Activated B cell treated with CpG ODN at 0.5 μM for 24 hours (primary cell): ENCODE measurements at regions of chr15 and their contacts with region 1.

Region 1: DNA sequence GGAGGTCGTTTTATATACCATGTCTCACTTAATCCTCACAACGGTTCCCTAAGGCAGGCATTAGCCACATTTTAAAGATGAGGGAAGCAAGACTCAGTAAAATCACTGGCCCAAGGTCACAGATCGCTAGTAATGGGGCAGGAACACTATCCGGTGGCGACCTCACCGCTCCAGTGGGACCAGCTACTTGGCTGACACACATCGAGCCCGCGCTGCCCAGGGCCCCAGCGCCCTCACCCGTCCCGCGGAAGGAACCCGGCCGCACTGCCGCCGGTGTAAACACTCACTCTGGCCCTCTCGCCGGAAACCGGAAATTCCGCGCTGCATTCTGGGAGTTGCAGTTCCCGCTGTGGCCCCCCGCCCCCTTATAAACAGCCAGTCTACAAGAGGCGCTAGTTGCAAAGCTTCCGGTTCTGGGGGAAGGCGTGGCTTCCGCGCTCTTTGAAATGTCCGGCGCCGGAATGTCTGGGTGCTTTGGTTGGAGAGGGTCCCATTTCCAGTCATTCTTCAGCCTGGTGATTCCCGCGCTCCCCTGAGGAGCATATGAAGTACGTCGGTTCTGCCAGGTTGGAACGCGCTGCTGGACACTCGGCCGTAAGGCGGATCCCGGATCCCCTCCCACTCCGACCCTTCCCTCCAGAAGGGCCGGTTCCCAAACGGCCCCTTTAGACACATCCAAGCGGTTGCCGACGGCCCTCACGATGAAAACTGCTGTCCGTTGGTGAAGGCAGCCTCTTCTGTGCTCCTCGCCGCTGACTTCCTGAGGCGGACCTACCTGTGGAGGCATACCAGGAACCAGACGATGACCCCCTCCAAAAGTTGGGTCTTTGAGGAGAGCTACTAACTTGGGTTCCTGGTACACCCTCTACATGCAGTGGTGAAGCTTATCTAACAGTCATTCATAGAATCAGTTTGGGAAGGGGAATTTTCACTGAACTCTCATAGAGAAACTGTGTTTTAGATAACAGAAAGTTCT is at the start of gene UBL7:
- DNase-seq: peak; percentile 92
- ATAC-seq: peak; percentile 95
- H3K4me3 Mint-ChIP-seq: peak within 1 kb of the TSS; percentile 93
- H3K27ac Mint-ChIP-seq: peak within 1 kb of the TSS; percentile 91
- H3K4me1 Mint-ChIP-seq: peaks cover 44% of the 10 kb centered on the region
- H3K27me3 Mint-ChIP-seq: no peaks in the 10 kb centered on the region
- CTCF ChIP-seq: no peak
- total RNA-seq, gene UBL7: 40.6 and 48.8 TPM in 2 replicates

Region 2: DNA sequence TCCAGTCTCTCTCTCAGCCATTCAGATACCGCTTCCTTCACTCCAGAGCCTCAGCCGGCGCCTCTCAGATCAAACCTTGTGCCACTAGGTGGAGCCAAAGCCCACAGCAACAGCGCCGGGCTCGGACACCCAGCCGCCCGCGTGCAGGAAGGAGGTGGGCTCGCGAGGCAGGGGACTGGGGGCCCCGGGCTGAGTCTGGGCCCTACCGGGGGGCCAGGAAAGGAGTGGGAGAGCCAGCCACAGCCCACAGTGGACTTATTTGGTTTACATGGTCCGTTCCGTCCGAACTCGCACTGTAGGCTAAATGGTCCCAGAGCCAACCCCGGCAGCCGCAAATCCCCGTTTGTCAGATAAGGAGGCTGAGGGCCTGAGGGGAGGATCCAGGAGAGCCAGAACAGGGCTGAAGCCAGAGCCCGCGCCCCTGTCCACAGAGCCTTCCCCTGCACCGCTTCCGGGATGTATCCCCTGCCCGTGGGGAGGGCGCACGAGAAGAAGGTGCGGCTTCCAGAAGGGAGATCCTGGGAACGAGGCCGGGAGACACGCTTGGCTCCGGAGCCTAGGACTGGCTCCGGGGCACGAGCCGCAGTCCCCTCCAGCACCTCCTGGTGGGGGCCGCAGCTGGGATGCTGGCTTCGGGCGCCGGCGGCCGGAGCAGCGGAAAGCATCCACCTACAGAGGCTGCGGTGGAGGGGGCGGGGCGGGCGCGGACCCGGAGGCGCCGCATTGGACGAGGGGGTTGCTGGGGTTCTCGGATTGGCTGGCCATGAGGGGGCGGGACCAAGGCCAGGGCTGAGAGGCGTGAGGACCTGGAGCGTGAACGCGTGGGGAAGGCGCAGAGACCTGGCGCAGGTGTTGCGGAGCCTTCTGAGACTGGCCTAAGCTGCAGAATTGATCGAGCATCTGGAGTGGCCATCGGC is 87.2 kb before region 1 on chr15:
- CTCF ChIA-PET with region 1: interaction called, 5 read pairs
- POLR2A ChIA-PET with region 1: interaction called, 7 read pairs
- intact Hi-C with region 1: loop called (anchors 1 kb)
- DNase-seq: peak; percentile 89
- ATAC-seq: peak; percentile 94
- H3K4me3 Mint-ChIP-seq: peak overlapping the region; percentile 81
- H3K27ac Mint-ChIP-seq: peak overlapping the region; percentile 12
- H3K4me1 Mint-ChIP-seq: peaks cover 29% of the 10 kb centered on the region
- H3K27me3 Mint-ChIP-seq: peaks cover 9% of the 10 kb centered on the region
- CTCF ChIP-seq: peak; percentile 32

Region 3: DNA sequence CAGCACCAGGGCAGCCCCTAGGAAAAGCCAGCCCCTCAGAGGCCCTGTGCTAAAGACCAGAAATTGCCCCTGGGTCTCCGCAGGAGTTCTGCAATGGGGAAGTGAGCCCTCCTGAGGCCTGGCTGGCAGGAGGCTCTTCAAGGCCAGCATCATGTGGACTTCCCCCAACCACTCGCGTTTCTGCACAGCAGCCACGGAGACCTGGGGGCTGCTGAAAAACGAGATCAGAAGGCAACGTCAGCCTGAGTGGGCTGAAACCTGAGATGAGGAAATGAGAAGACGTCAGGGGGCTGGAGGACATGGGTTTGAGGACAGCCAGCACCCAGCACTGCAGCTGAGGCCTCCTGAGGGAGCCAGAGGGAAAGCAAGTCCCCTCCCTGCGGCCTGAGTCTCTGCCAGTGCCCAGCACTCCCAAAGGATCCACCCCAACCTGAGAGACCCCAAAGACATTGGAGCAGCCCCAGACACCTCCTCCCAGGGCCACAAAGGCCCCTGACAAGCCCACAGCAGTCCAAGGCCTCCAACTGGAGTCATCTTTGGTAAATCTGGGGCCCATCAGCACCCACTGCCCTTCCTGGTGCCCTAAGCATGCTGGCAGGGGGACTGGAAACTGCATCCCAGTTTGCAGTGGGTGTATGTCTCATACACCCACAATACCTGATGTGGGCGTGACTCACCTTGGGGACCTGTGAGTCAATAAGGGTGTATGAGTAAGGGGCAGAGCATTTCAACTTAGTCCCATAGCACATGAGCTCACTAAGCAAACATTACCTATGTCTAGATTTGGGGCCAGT is 64.5 kb before region 1 on chr15:
- CTCF ChIA-PET with region 1: no interaction called
- POLR2A ChIA-PET with region 1: interaction called, 13 read pairs
- intact Hi-C with region 1: loop called (anchors 2 kb)
- DNase-seq: peak; percentile 72
- ATAC-seq: peak; percentile 66
- H3K4me3 Mint-ChIP-seq: peak overlapping the region; percentile 80
- H3K27ac Mint-ChIP-seq: peak overlapping the region; percentile 99
- H3K4me1 Mint-ChIP-seq: peaks cover 100% of the 10 kb centered on the region
- H3K27me3 Mint-ChIP-seq: no peaks in the 10 kb centered on the region
- CTCF ChIP-seq: no peak

Region 4: GRCh38 chr15:74433592-74434262 is 27.4 kb before region 1 on chr15 and contains the start of gene SEMA7A:
- CTCF ChIA-PET with region 1: interaction called, 3 read pairs
- POLR2A ChIA-PET with region 1: interaction called, 26 read pairs
- intact Hi-C with region 1: loop called (anchors 1 kb)
- DNase-seq: peak; percentile 83
- ATAC-seq: peak; percentile 80
- H3K4me3 Mint-ChIP-seq: peak within 1 kb of the TSS; percentile 96
- H3K27ac Mint-ChIP-seq: peak within 1 kb of the TSS; percentile 90
- H3K4me1 Mint-ChIP-seq: peaks cover 76% of the 10 kb centered on the region
- H3K27me3 Mint-ChIP-seq: no peaks in the 10 kb centered on the region
- CTCF ChIP-seq: no peak
- total RNA-seq, gene SEMA7A: 159 and 178 TPM in 2 replicates

Region 5: DNA sequence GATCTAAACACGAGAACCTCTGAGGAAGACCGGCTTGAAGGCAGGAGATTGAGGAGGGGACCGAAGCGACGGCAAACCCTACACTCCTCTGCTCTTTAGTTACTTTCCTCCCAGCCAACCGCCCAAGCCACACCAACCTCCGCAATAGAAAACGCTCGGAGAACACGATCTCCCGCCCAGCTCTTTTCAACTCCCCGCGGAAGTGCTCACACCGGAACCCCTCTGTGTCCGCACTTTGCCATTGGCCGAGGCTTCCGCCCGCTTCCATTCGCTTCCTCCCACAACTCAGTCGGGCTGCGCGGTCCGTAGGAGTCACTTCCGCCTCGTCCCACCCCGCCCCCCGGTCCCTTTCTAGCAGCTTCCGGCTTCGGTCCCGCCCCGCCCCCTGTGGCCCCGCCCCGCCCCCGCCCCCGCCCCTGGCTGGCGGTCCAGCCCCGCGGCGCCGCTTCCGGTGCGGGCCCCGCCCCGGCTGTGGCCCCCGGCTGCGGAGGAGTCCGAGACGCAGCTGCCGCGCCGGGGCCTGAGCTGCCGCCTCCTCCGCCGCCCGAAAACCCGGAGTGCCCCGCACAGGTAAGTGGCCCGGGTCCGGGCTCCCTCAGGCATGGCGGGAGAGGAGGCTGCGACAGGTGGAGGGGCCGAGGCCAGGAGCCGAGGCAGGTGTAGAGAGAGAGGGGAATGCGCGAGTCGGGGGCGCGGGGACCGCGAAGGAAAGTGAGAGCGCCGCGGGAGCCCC is 79.8 kb after region 1 on chr15 and contains the start of gene ARID3B:
- CTCF ChIA-PET with region 1: no interaction called
- POLR2A ChIA-PET with region 1: interaction called, 11 read pairs
- intact Hi-C with region 1: loop called (anchors 1 kb)
- DNase-seq: peak; percentile 79
- ATAC-seq: peak; percentile 86
- H3K4me3 Mint-ChIP-seq: peak within 1 kb of the TSS; percentile 98
- H3K27ac Mint-ChIP-seq: peak within 1 kb of the TSS; percentile 95
- H3K4me1 Mint-ChIP-seq: peaks cover 49% of the 10 kb centered on the region
- H3K27me3 Mint-ChIP-seq: no peaks in the 10 kb centered on the region
- CTCF ChIP-seq: no peak
- total RNA-seq, gene ARID3B: 24.8 and 26.9 TPM in 2 replicates

Region 6: GRCh38 chr15:74598126-74598842 is 137.1 kb after region 1 on chr15:
- CTCF ChIA-PET with region 1: no interaction called
- POLR2A ChIA-PET with region 1: no interaction called
- intact Hi-C with region 1: loop called (anchors 1 kb)
- DNase-seq: peak; percentile 80
- ATAC-seq: peak; percentile 99
- H3K4me3 Mint-ChIP-seq: peak overlapping the region; percentile 96
- H3K27ac Mint-ChIP-seq: peak overlapping the region; percentile 88
- H3K4me1 Mint-ChIP-seq: peaks cover 19% of the 10 kb centered on the region
- H3K27me3 Mint-ChIP-seq: no peaks in the 10 kb centered on the region
- CTCF ChIP-seq: no peak

Region 7: GRCh38 chr15:74695597-74696397 is 234.6 kb after region 1 on chr15 and contains the start of gene EDC3:
- CTCF ChIA-PET with region 1: no interaction called
- POLR2A ChIA-PET with region 1: no interaction called
- intact Hi-C with region 1: loop called (anchors 10 kb)
- DNase-seq: peak; percentile 80
- ATAC-seq: peak; percentile 93
- H3K4me3 Mint-ChIP-seq: peak within 1 kb of the TSS; percentile 99
- H3K27ac Mint-ChIP-seq: peak within 1 kb of the TSS; percentile 91
- H3K4me1 Mint-ChIP-seq: peaks cover 39% of the 10 kb centered on the region
- H3K27me3 Mint-ChIP-seq: no peaks in the 10 kb centered on the region
- CTCF ChIP-seq: no peak
- total RNA-seq, gene EDC3: 44.8 and 49.5 TPM in 2 replicates